WTC11 (cell line): ENCODE measurements at regions of chr6 and their contacts with region 1.

Region 1: GRCh38 chr6:76877238-76877553 is 586.1 kb downstream of the HTR1B start:
- DNase-seq: no peak
- ATAC-seq: no peak
- H3K4me3 Mint-ChIP-seq: peak overlapping the region; percentile 87
- H3K27ac Mint-ChIP-seq: no peak overlapping the region
- H3K4me1 Mint-ChIP-seq: no peaks in the 10 kb centered on the region; the same call in 1 of the 2 replicates
- H3K27me3 Mint-ChIP-seq: peaks cover 3% of the 10 kb centered on the region; the same call in 1 of the 2 replicates
- CTCF ChIP-seq: no peak

Region 2: DNA sequence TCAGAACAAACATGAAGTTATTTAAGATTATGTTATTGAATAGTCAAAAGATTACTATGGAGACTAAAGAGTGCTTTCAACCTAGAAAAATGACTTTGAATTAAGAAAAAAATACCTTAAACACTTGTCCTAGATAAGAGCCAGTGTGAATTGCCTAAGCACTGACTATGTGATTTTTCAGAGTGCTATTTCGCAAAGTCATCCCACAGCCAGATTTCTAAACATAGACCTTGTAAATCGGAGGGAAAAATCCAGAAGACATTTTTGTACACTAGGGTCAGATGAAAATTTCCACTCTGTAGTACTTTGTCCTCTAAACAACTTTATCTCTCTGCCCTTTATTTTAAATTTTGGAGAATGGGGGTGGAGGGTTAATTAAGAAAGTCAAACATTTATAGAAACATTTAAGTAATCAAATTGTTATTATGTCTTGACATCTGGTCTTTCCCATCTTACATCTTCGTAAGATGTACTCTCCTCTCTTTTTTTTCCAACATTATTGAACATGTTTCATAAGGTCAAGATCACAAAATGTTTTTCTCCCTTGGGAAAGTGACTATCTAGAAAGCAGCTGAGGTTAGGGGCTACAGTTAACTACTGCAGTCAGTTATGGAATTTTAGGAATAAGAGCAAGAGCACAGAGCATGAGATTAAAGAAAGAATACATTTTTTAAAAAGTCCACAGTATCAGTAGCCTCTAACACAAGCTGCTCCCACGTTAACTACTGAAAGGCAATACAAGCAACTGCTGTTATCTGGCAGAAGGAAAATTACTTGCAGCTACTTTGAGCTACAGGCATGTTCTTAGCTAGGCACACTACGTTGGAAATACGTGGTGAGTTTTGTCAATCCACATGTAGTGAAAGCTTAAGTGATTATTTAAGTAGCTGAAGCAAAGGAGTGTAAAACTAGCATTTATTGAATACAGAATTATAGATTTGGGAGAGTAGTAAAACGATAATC is 62.4 kb before region 1 on chr6:
- CTCF ChIA-PET with region 1: no interaction called
- POLR2A ChIA-PET with region 1: no interaction called
- DNase-seq: no peak
- ATAC-seq: no peak
- H3K4me3 Mint-ChIP-seq: no peak overlapping the region
- H3K27ac Mint-ChIP-seq: no peak overlapping the region
- H3K4me1 Mint-ChIP-seq: peaks cover 14% of the 10 kb centered on the region
- H3K27me3 Mint-ChIP-seq: no peaks in the 10 kb centered on the region
- CTCF ChIP-seq: no peak

Region 3: GRCh38 chr6:76861403-76861802 is 15.8 kb before region 1 on chr6:
- CTCF ChIA-PET with region 1: interaction called, 14 read pairs
- POLR2A ChIA-PET with region 1: no interaction called
- DNase-seq: peak; percentile 64
- ATAC-seq: peak; percentile 99
- H3K4me3 Mint-ChIP-seq: no peak overlapping the region
- H3K27ac Mint-ChIP-seq: no peak overlapping the region
- H3K4me1 Mint-ChIP-seq: peaks cover 4% of the 10 kb centered on the region
- H3K27me3 Mint-ChIP-seq: peaks cover under 1% of the 10 kb centered on the region; the same call in 1 of the 2 replicates
- CTCF ChIP-seq: peak; percentile 37; the same call in 1 of the 2 replicates

Region 4: GRCh38 chr6:77021232-77021631 is 144.0 kb after region 1 on chr6:
- CTCF ChIA-PET with region 1: no interaction called
- POLR2A ChIA-PET with region 1: no interaction called
- DNase-seq: no peak
- ATAC-seq: no peak
- H3K4me3 Mint-ChIP-seq: no peak overlapping the region
- H3K27ac Mint-ChIP-seq: no peak overlapping the region
- H3K4me1 Mint-ChIP-seq: no peaks in the 10 kb centered on the region
- H3K27me3 Mint-ChIP-seq: no peaks in the 10 kb centered on the region; the same call in 1 of the 2 replicates
- CTCF ChIP-seq: no peak